BJ (cell line): ENCODE measurements at regions of chr6 and their contacts with region 1.

Region 1: GRCh38 chr6:152124429-152125074 is 317.1 kb downstream of the ESR1 start:
- DNase-seq: peak; percentile 18
- H3K4me3 ChIP-seq: no peak overlapping the region
- H3K27me3 ChIP-seq: no peaks in the 10 kb centered on the region
- CTCF ChIP-seq: peak; percentile 79

Region 2: GRCh38 chr6:151765444-151765886 is 359.1 kb before region 1 on chr6:
- CTCF ChIA-PET with region 1: interaction called, 40 read pairs
- POLR2A ChIA-PET with region 1: no interaction called
- DNase-seq: peak; percentile 41
- H3K4me3 ChIP-seq: no peak overlapping the region
- H3K27me3 ChIP-seq: no peaks in the 10 kb centered on the region; the same call in 1 of the 2 replicates
- CTCF ChIP-seq: peak; percentile 70

Region 3: GRCh38 chr6:152094992-152095592 is 29.5 kb before region 1 on chr6:
- CTCF ChIA-PET with region 1: interaction called, 10 read pairs
- POLR2A ChIA-PET with region 1: no interaction called
- DNase-seq: peak; percentile 99
- H3K4me3 ChIP-seq: no peak overlapping the region
- H3K27me3 ChIP-seq: no peaks in the 10 kb centered on the region
- CTCF ChIP-seq: no peak

Region 4: GRCh38 chr6:152110886-152111820 is 13.4 kb before region 1 on chr6:
- CTCF ChIA-PET with region 1: interaction called, 42 read pairs
- POLR2A ChIA-PET with region 1: no interaction called
- DNase-seq: peak; percentile 47
- H3K4me3 ChIP-seq: no peak overlapping the region
- H3K27me3 ChIP-seq: no peaks in the 10 kb centered on the region
- CTCF ChIP-seq: no peak

Region 5: DNA sequence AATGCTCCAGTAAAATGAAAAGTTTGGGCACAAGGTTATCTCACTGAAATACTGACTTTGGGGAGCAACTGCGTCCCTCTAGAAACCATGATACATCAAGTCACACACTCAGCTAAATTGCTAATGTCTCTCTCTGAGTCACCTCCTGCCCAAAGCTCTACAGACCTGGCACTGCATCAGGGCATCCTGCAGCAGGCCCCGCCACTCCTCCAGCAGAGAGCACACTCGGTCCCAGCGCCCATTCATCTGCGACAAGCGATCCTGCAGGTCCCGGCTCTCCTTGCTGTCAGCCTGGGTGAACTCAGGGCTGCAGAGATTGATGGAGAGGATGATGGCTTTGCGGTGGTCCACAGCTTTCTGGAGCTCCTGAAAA is 11.9 kb after region 1 on chr6:
- CTCF ChIA-PET with region 1: interaction called, 12 read pairs
- POLR2A ChIA-PET with region 1: interaction called, 3 read pairs
- DNase-seq: no peak
- H3K4me3 ChIP-seq: no peak overlapping the region
- H3K27me3 ChIP-seq: no peaks in the 10 kb centered on the region
- CTCF ChIP-seq: no peak

Region 6: GRCh38 chr6:152142105-152142504 is 17.6 kb after region 1 on chr6:
- CTCF ChIA-PET with region 1: interaction called, 13 read pairs
- POLR2A ChIA-PET with region 1: no interaction called
- DNase-seq: no peak
- H3K4me3 ChIP-seq: no peak overlapping the region
- H3K27me3 ChIP-seq: no peaks in the 10 kb centered on the region
- CTCF ChIP-seq: no peak